Heart left ventricle (tissue), 16 donors: ENCODE measurements at regions of chr19 and their contacts with region 1.

Region 1: DNA sequence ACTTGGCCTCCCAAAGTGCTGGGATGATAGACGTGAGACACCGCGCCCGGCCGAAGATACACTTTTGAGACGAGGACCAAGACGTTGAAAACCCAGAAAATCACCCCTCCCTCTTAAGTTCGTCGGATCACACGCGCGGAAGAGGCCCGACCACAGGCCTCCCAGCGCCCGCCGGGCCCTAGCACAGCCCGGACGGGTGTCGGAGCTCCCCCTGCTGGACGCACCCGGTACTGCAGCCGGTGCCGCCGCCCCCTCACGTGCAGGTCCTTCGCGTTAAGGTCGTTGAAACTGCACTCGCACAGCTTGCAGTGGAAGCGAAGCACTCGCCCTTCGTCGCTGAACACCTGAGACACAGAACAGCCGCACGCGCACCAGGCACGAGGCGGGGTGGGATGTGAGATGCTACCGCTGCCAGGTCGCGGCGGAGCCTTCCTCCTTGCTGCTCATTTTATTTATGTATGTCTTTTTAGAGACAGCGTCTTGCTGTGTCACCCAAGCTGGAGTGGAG is 35.7 kb upstream of the MATK start:
- DNase-seq: peak; percentile 44 to 89 (median 62)
- ATAC-seq: peak in 3 of 4 donors; percentile 61 to 85 (median 80)
- H3K4me3 ChIP-seq: no peak overlapping the region
- H3K27ac ChIP-seq: no peak overlapping the region
- H3K4me1 ChIP-seq: peaks cover 0 to 15% (median 3%) of the 10 kb centered on the region in 12 donors
- H3K27me3 ChIP-seq: peaks cover 0 to 4% (median 0%) of the 10 kb centered on the region in 9 donors
- CTCF ChIP-seq: peak; percentile 94 to 100 (median 98)
- POLR2A ChIP-seq: no peak

Region 2: GRCh38 chr19:3762501-3763459 is 59.1 kb before region 1 on chr19 and contains the start of gene MRPL54:
- intact Hi-C with region 1: loop called in 4 of 10 experiments (anchors 5 to 10 kb)
- DNase-seq: peak; percentile 99 to 100 (median 99)
- ATAC-seq: peak; percentile 94 to 97 (median 96)
- H3K4me3 ChIP-seq: peak within 1 kb of the TSS; percentile 69 to 98 (median 90)
- H3K27ac ChIP-seq: peak within 1 kb of the TSS; percentile 90 to 99 (median 97)
- H3K4me1 ChIP-seq: peaks cover 5 to 43% (median 28%) of the 10 kb centered on the region in 12 donors
- H3K27me3 ChIP-seq: no peaks in the 10 kb centered on the region
- CTCF ChIP-seq: no peak
- POLR2A ChIP-seq: peak in 1 of 2 donors; percentile 54
- total RNA-seq, gene MRPL54: 58.9 to 96.9 (median 69.1) TPM

Region 3: DNA sequence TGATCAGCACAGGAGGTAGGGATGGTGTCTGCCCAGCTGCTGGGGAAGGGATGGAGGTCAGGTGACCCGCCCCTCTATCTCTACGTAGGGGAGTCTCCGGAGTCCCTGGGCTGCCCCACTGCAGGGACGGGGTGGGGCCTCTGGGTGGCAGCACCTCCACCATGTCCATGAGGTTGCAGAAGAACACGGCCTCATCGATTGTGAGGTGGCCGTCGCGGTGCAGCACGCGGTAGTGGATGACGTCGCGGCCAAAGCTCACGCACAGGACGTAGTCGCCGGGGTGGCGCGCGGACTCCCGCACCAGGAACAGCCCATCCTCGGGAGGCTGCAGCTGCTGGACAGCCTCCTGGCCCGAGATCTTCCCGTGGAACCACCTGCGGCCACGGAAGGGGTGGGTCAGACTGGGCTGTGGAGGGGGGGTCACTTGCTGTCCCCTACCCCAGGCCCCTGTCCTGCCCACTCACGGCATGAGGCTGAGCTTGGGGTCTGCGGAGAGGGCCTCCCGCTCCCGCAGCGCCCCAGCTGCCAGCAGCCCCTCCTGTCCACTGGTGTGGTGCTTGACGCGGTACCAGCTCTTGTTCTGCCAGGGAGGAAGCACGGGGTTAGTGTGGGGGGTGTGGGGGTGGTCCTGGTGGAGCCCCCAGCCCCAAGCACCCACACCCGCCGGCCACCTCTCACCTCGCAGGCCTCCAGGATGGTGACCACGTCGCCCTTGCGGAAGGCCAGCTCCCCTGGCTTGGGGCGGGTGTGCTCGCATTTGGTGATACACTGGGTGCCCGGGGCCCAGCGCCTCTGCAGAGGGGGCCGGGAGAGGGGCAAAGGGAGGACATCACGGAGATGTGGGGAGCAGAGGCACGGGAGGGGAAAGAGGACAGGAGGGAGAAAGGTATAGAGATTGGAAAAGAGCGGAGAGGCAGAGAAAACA is 38.0 kb before region 1 on chr19:
- intact Hi-C with region 1: loop called in 2 of 10 experiments (anchors 5 kb)
- DNase-seq: no peak
- ATAC-seq: peak in 3 of 4 donors; percentile 8 to 38 (median 29)
- H3K4me3 ChIP-seq: no peak overlapping the region
- H3K27ac ChIP-seq: no peak overlapping the region
- H3K4me1 ChIP-seq: peaks cover 0 to 17% (median 0%) of the 10 kb centered on the region in 12 donors
- H3K27me3 ChIP-seq: peaks cover 6 to 52% (median 27%) of the 10 kb centered on the region in 9 donors
- CTCF ChIP-seq: peak in 11 of 12 donors; percentile 11 to 46 (median 24)
- POLR2A ChIP-seq: no peak

Region 4: DNA sequence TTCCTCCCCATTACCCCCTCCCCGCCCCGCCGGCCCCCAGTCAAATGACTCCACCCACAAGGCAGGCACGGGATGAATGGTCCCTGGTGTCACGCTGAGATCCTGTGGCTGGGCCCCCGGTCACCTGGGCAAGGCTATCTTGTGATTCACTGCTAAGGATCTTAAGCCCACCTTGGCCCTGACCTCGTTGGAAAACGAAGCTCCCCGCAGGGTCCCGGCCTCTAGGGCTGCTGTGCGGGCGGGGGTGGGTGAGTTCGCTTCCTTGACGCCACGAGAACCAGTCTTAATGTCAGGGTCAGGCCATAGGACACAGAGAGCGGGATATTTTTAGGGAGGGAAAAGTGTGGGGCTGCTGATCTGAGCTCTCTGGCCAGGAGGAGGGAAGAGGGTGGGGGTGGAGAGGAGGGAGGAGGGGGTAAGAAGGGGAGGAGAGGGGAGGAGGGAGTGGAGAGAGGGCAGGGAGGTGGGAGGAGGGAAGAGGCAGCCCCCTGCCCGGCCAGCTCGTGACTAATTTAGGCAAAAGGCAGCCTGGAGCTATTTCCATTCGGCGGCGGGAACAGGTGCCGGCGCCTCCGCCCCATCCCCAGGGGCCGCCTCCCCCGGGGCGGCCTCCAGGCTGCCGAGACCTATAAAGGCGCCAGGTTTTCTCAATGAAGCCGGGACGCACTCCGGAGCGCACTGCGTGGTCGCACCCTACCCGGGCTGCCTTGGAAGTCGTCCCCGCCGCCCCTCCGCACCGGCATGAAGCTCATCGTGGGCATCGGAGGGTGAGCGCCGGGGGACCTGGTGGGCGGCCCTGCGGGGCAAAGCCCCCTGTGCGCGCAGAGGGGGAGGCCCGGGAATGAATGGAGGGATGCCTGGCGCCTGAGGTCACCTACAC is 111.3 kb after region 1 on chr19 and contains the start of gene NMRK2:
- intact Hi-C with region 1: no loop called
- DNase-seq: peak; percentile 69 to 89 (median 76)
- ATAC-seq: peak; percentile 57 to 81 (median 73)
- H3K4me3 ChIP-seq: peak within 1 kb of the TSS; percentile 32 to 81 (median 56)
- H3K27ac ChIP-seq: peak within 1 kb of the TSS; percentile 64 to 98 (median 90)
- H3K4me1 ChIP-seq: peaks cover 0 to 24% (median 3%) of the 10 kb centered on the region in 12 donors
- H3K27me3 ChIP-seq: peaks cover 0 to 25% (median 0%) of the 10 kb centered on the region in 9 donors
- CTCF ChIP-seq: no peak
- POLR2A ChIP-seq: peak in 1 of 2 donors; percentile 80
- total RNA-seq, gene NMRK2: 347 to 2,001 (median 606) TPM